Thyroid gland (tissue), 4 donors: ENCODE measurements at regions of chr3 and their contacts with region 1.

Region 1: GRCh38 chr3:73848173-73848906 is 223.6 kb upstream of the PDZRN3 start:
- DNase-seq: no peak
- H3K4me3 ChIP-seq: no peak overlapping the region
- H3K27ac ChIP-seq: no peak overlapping the region
- H3K4me1 ChIP-seq: no peaks in the 10 kb centered on the region
- H3K27me3 ChIP-seq: no peaks in the 10 kb centered on the region
- CTCF ChIP-seq: peak in 4 of 6 experiments; percentile 12 to 48 (median 30)
- POLR2A ChIP-seq: no peak

Region 2: GRCh38 chr3:73508330-73508954 is 339.9 kb before region 1 on chr3:
- intact Hi-C with region 1: loop called (anchors 5 kb)
- DNase-seq: peak; percentile 23 to 41
- H3K4me3 ChIP-seq: no peak overlapping the region
- H3K27ac ChIP-seq: no peak overlapping the region
- H3K4me1 ChIP-seq: no peaks in the 10 kb centered on the region
- H3K27me3 ChIP-seq: no peaks in the 10 kb centered on the region
- CTCF ChIP-seq: peak; percentile 30 to 78 (median 60)
- POLR2A ChIP-seq: no peak